ENCODE measurements at regions of chr2 and their contacts with region 1.

Region 1: GRCh38 chr2:143034292-143035074 is 94.7 kb upstream of the ARHGAP15 start:
- DNase-seq: peak; percentile 43
- H3K4me3 ChIP-seq: no peak overlapping the region
- H3K27me3 ChIP-seq: no peaks in the 10 kb centered on the region
- CTCF ChIP-seq: peak; percentile 90

Region 2: GRCh38 chr2:143051465-143051864 is 17.0 kb after region 1 on chr2:
- CTCF ChIA-PET with region 1: interaction called, 22 read pairs
- POLR2A ChIA-PET with region 1: no interaction called
- DNase-seq: no peak
- H3K4me3 ChIP-seq: no peak overlapping the region
- H3K27me3 ChIP-seq: no peaks in the 10 kb centered on the region
- CTCF ChIP-seq: no peak

Region 3: DNA sequence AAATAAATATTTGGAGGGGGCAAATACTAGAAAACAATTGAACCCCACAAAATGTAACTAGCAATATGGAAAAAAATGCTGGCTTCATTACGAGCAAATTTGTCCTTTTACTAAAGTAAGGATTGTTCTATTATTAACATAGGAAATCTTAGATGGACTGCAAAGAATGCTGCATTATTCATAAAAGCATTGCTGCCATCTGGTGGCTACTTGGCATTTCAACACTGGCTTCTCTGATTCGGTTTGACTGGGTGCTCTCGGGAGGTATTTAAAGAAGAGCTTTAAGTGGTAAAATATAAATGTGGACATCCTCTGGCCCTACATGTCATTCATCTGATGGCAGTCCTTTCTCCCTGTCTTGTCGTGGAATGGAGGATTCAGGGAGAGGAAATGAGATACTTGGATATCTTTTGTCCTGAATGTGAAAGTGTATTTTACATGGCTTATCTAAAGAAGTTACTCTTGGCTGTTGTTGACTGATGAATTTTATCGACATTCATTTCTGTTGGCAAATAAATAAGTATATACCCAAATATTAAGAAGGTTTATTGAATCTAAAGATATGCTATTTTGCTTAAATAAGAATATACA is 225.0 kb after region 1 on chr2:
- CTCF ChIA-PET with region 1: interaction called, 11 read pairs
- POLR2A ChIA-PET with region 1: no interaction called
- DNase-seq: peak; percentile 18
- H3K4me3 ChIP-seq: no peak overlapping the region
- H3K27me3 ChIP-seq: no peaks in the 10 kb centered on the region; the same call in 1 of the 2 replicates
- CTCF ChIP-seq: peak; percentile 82